Dorsolateral prefrontal cortex (tissue), 120 donors: ENCODE measurements at regions of chr13 and their contacts with region 1.

Region 1: GRCh38 chr13:99200432-99201167 is at the start of gene UBAC2:
- DNase-seq: peak; percentile 83 to 96 (median 90)
- H3K4me3 ChIP-seq: peak within 1 kb of the TSS; percentile 65 to 100 (median 99)
- H3K27ac ChIP-seq: peak within 1 kb of the TSS; percentile 71 to 98 (median 93)
- H3K27me3 ChIP-seq: no peaks in the 10 kb centered on the region
- CTCF ChIP-seq: peak in 49 of 56 donors; percentile 10 to 66 (median 45)
- total RNA-seq, gene UBAC2: 29.3 to 62.3 (median 43.6) TPM

Region 2: DNA sequence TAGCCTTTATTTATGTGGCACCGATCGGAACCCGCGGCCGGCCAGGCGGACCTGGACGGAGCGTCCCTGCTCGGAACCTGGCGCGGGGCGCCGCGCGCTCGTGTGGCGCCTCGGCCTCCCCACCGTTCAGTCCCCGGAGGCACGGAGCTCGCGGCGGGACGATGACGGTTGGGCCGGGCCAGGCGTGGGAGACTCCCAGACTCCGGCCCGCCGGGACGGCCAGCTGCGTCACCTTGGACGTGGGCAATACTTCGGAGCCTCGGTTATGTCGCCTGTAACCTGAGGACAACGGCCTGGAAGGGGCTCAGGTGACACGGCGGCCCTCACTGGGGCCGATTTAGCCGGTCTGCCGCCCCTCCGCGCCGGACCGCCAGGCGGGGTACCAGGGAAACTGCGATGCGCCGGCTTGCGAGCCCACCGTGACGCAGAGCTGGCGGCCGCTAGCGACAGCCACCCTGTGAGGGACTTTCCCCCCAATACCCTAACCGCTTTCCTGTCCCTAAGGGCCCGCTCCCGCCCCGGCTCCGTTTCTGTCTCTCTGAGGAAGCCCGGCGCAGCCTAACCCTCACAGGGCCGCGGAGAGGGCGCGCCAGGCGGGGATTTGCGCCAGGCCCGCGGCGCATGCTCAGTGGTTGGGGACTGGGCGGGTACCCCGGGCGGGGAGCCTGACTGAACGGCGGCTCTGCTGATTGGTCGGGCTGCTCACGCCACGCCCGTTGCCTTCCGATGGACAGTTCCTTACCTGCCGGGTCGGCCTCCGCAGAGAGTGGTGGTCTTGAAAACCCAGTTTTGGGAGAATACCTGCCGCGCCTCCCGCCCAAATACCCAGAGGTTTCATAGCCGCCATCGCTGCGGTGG is 113.3 kb before region 1 on chr13:
- intact Hi-C with region 1: loop called (anchors 2 kb)
- DNase-seq: peak; percentile 85 to 97 (median 91)
- H3K4me3 ChIP-seq: peak overlapping the region; percentile 45 to 97 (median 82)
- H3K27ac ChIP-seq: peak overlapping the region; percentile 35 to 99 (median 94)
- H3K27me3 ChIP-seq: no peaks in the 10 kb centered on the region
- CTCF ChIP-seq: peak in 48 of 56 donors; percentile 9 to 65 (median 34)

Region 3: DNA sequence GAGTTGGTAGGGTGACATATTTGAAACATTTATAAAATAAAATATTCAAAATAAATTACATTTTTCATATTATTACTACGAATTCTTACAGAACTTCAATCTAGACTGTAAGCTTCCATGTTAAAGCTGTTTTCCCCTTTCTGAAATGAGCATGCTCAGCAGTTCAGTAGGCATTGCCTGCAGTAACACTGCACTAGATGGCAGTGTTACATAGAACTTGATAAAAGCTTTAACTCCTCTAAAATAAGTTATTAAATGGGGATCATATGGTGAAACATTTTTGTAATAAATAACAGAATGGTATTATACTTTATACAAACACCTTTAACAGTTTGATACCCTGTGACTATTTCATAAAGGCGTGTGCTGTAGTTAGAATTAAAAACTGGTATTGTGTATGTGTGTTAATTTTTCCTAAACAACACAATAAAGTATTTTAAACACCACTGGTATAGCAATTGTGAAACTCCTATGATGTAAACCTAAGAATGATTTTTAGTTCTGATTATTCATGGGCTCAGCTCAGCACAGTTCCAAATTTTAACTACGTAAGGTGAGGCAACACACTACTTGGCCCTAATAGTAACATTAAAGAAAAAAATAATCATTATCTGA is 69.1 kb after region 1 on chr13:
- intact Hi-C with region 1: loop called in 1 of 2 experiments (anchors 5 kb)
- DNase-seq: peak in 1 of 10 donors; percentile 18
- H3K4me3 ChIP-seq: no peak overlapping the region
- H3K27ac ChIP-seq: peak overlapping the region in 1 of 59 donors; percentile 16
- H3K27me3 ChIP-seq: no peaks in the 10 kb centered on the region
- CTCF ChIP-seq: peak; percentile 32 to 87 (median 70)

Region 4: GRCh38 chr13:99501184-99501847 is 300.7 kb after region 1 on chr13 and contains the start of gene TM9SF2:
- intact Hi-C with region 1: loop called (anchors 2 to 10 kb)
- DNase-seq: peak; percentile 86 to 95 (median 92)
- H3K4me3 ChIP-seq: peak within 1 kb of the TSS; percentile 61 to 99 (median 88)
- H3K27ac ChIP-seq: peak within 1 kb of the TSS in 57 of 59 donors; percentile 12 to 96 (median 79)
- H3K27me3 ChIP-seq: no peaks in the 10 kb centered on the region
- CTCF ChIP-seq: peak in 31 of 56 donors; percentile 6 to 60 (median 33)
- total RNA-seq, gene TM9SF2: 37.7 to 80.9 (median 64.8) TPM

Region 5: DNA sequence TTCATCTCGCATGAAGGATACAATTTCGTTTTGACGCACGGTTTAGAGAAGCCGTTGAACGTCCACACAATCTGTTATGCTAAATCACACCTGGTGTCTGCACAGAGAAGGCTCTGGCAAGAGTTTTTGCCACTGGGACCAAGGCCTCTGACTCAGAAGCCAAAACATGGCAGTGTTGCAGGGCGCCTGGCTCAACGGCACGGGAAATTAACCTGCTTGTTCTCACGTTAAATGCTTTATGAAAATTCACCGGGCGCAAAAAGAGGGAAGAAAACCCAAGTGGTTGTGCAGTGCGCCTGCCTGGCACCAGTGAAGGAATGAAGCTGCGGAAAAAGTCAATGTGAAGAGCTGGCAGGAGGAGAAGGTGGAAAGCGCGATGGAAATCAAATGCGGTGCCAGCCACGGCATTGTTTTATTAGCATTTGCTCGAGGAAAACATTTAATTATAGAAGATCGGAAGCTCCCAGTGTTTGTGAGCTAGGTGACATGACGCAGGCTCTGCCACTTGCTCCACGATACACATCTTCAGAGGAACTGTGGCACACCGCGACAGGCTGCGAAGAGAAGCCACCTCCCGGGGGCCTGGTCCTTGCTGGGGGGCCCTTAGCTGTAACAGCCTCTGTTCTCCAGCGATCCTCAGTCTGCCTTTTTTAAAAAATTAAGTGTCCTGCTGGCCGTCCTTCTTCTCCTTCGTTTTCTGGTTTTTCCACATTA is 644.7 kb after region 1 on chr13:
- intact Hi-C with region 1: no loop called
- DNase-seq: peak in 1 of 10 donors; percentile 67
- H3K4me3 ChIP-seq: no peak overlapping the region
- H3K27ac ChIP-seq: peak overlapping the region in 1 of 59 donors; percentile 70
- H3K27me3 ChIP-seq: peaks cover 0 to 18% (median 0%) of the 10 kb centered on the region in 45 donors
- CTCF ChIP-seq: no peak